ENCODE measurements at regions of chr9 and their contacts with region 1.

Region 1: DNA sequence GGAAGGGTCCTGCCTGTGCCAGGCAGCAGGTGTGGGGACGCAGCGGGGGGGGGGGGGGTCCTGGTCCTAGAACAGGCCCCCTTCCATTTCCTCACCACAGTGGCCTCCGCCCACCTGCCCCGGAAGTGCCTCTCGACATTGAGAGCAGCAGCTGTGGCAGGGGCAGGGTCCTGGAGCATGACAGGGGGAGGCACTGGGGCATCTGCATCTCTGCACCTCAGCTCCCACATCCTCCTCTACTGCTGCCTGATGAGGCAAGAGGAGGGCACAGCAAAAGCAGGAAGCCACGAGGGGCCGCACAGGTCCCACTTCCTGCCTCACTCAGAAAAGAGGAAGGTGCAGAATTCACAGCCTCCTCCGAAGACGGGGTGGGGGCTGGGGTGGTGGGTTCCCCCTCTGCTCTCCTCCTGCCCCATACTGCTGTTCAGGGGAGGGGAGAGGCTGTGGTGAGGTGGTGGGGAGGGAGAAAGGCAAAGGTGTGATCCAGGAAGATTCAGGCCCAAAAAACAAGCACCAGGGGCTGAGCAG is 14.8 kb downstream of the AKNA start:
- DNase-seq: peak; percentile 96
- ATAC-seq: peak; percentile 93
- H3K4me3 ChIP-seq: peak overlapping the region in 3 of 5 experiments; percentile 13 to 33 (median 19)
- H3K4me3 Mint-ChIP-seq: peak overlapping the region; percentile 79
- H3K27ac ChIP-seq: peak overlapping the region; percentile 92 to 95
- H3K27ac Mint-ChIP-seq: peak overlapping the region; percentile 97
- H3K4me1 ChIP-seq: peaks cover 86 to 96% of the 10 kb centered on the region in 2 donors
- H3K4me1 Mint-ChIP-seq: peaks cover 91% of the 10 kb centered on the region
- H3K27me3 ChIP-seq: no peaks in the 10 kb centered on the region
- H3K27me3 Mint-ChIP-seq: no peaks in the 10 kb centered on the region
- CTCF ChIP-seq: no peak

Region 2: GRCh38 chr9:114348906-114349482 is 24.0 kb before region 1 on chr9:
- CTCF ChIA-PET with region 1: interaction called, 5 read pairs
- POLR2A ChIA-PET with region 1: interaction called, 9 read pairs
- intact Hi-C with region 1: loop called (anchors 1 kb)
- DNase-seq: peak; percentile 91
- ATAC-seq: peak; percentile 94
- H3K4me3 ChIP-seq: no peak overlapping the region
- H3K4me3 Mint-ChIP-seq: peak overlapping the region; percentile 83
- H3K27ac ChIP-seq: peak overlapping the region; percentile 68 to 80
- H3K27ac Mint-ChIP-seq: peak overlapping the region; percentile 97
- H3K4me1 ChIP-seq: peaks cover 26 to 36% of the 10 kb centered on the region in 2 donors
- H3K4me1 Mint-ChIP-seq: peaks cover 44% of the 10 kb centered on the region
- H3K27me3 ChIP-seq: no peaks in the 10 kb centered on the region
- H3K27me3 Mint-ChIP-seq: no peaks in the 10 kb centered on the region
- CTCF ChIP-seq: no peak

Region 3: DNA sequence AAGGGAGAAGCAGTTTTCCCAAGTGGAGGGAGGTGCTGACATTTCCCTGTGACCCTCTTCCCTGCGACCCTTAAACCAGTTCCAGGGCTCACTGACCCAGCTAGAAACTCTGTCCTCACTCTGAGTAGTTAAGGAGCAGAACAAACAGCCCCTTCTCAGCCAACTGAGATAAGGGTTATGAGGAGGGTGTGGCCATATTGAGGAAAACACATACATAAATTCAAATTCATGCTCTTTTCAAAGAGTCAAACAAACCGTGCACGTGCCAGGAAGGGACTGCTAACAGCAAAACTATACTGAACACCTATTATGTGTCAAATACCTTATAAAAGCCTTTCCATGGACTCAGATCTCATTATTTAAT is 19.7 kb after region 1 on chr9:
- CTCF ChIA-PET with region 1: interaction called, 85 read pairs
- POLR2A ChIA-PET with region 1: interaction called, 135 read pairs
- intact Hi-C with region 1: no loop called
- DNase-seq: peak; percentile 36
- ATAC-seq: no peak
- H3K4me3 ChIP-seq: no peak overlapping the region
- H3K4me3 Mint-ChIP-seq: peak overlapping the region; percentile 60
- H3K27ac ChIP-seq: peak overlapping the region in 1 of 2 donors; percentile 50
- H3K27ac Mint-ChIP-seq: peak overlapping the region; percentile 86
- H3K4me1 ChIP-seq: peaks cover 92 to 97% of the 10 kb centered on the region in 2 donors
- H3K4me1 Mint-ChIP-seq: peaks cover 92% of the 10 kb centered on the region
- H3K27me3 ChIP-seq: no peaks in the 10 kb centered on the region
- H3K27me3 Mint-ChIP-seq: no peaks in the 10 kb centered on the region
- CTCF ChIP-seq: no peak